Common myeloid progenitor, CD34-positive (primary cell): ENCODE measurements at regions of chr22 and their contacts with region 1.

Region 1: GRCh38 chr22:22687638-22688500 is 43.5 kb downstream of the GGTLC2 start:
- DNase-seq: peak; percentile 36 to 65 (median 55)
- H3K4me3 ChIP-seq: no peak overlapping the region
- H3K27ac ChIP-seq: no peak overlapping the region
- H3K4me1 ChIP-seq: peaks cover 0 to 12% (median 8%) of the 10 kb centered on the region in 4 experiments
- H3K27me3 ChIP-seq: no peaks in the 10 kb centered on the region

Region 2: DNA sequence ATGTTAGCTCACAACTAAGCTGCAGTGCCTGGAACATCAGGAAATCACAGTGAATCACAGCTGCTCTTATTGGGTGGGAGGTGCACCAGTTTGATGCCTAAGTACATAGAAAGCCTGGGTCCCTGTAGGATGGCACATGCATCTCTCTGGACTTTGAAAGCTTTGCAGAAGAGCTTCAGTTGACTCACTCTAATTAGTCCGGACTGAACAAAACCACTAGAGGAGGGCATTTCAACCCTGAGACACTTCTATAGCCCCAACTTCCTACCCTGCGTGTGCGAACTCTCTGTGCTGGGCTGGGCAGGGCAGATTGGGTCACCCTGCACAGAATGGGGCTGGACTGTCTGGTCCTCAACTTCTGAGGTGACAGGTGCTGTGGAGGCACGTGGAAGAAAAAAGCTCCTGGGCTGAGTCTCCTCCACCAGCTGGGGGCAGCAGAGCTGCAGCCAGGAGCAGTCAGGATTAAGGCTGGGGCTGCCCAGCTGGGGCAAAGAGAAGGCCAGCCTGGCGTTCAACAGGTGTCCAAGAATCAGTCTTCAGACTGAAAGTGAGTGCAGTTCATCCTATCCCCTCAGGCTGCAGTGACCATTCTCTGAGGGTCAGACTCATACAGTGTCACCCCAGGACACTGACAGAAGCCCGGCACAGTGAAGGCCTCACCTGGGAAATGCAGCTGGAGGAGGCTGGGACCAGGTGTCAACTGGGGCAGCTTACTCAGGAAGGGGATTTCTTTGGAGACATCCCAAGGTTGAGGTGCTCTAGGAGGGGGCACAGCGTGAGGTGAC is 21.4 kb before region 1 on chr22:
- CTCF ChIA-PET with region 1: interaction called, 28 read pairs
- POLR2A ChIA-PET with region 1: no interaction called
- DNase-seq: peak in 2 of 3 donors; percentile 28 to 32
- H3K4me3 ChIP-seq: no peak overlapping the region
- H3K27ac ChIP-seq: no peak overlapping the region
- H3K4me1 ChIP-seq: no peaks in the 10 kb centered on the region
- H3K27me3 ChIP-seq: no peaks in the 10 kb centered on the region

Region 3: DNA sequence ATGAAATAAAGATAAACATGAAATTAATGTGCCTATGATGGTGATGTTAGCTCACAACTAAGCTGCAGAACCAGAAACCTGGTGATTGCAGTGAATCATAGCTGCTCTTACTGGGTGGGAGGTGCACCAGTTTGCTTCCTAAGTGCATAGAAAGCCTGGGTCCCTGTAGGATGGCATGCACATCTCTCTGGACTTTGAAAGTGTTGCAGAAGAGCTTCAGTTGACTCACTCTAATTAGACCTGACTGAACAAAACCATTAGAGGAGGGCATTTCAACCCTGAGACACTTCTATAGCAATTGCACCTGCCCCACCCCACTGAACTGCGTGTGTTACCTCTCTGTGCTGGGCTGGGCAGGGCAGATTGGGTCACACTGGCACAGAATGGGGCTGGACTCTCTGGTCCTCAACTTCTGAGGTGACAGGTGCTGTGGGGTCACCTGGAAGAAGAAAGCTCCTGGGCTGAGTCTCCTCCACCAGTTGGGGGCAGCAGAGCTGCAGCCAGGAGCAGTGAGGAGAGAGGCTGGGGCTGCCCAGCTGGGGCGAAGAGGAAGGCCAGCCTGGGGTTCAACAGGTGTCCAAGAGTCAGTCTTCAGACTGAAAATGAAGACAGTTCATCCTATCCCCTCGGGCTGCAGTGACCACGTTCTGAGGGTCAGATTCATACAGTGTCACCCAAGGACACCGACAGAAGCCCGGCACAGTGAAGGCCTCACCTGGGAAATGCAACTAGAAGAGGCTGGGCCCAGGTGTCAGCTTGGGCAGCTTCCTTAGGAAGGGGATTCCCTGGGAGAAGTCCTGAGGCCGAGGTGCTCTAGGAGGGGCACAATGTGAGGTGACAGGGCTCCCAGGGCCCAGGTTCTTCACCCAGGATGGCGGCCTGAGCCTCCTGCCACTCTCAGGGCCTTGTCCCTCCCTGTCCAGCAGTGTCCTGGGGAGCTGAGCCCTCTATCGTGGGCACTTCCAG is 14.7 kb after region 1 on chr22:
- CTCF ChIA-PET with region 1: interaction called, 23 read pairs
- POLR2A ChIA-PET with region 1: no interaction called
- DNase-seq: no peak
- H3K4me3 ChIP-seq: no peak overlapping the region
- H3K27ac ChIP-seq: no peak overlapping the region
- H3K4me1 ChIP-seq: no peaks in the 10 kb centered on the region
- H3K27me3 ChIP-seq: peaks cover 0 to 3% (median 0%) of the 10 kb centered on the region in 5 experiments